BJ (cell line): ENCODE measurements at regions of chr17 and their contacts with region 1.

Region 1: DNA sequence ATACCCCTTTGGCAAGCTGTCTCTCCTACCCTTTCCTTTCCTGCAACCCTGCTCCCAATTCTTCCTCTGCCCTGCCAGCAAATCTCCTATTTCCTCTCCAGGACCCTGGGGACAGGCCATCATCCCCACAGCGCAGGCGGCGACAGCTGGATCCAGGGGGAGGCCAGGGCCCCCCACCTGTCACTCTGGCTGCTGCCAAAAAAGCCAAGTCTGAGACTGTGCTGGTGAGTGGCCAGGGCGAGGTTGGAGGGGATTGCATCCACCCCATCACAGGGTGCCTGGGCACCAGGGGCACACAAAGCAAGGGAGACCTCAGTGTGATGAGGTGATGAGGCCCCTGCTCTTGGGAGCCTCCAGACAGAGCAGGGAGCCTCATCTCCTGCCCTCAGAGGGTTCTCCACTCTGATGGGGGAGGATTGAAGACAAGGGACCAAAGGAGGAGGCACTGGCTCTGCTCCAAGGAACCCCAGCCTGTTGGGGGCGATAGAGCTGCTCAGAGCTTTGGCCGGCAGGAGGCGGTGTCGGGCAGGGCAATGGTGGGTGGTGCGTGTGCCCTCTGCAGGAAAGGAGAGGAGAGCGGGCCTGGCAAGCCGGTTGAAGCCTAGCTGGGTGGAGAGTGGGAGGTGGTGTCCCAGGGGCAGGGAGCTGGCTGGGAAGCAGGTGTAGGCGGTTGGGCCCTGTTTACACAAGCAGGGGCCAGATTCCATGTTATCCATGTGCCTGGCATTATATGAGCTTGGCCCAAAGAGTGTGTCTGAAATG is 15.6 kb upstream of the PDK2 start:
- DNase-seq: no peak
- H3K4me3 ChIP-seq: no peak overlapping the region
- H3K27me3 ChIP-seq: no peaks in the 10 kb centered on the region
- CTCF ChIP-seq: peak; percentile 78

Region 2: DNA sequence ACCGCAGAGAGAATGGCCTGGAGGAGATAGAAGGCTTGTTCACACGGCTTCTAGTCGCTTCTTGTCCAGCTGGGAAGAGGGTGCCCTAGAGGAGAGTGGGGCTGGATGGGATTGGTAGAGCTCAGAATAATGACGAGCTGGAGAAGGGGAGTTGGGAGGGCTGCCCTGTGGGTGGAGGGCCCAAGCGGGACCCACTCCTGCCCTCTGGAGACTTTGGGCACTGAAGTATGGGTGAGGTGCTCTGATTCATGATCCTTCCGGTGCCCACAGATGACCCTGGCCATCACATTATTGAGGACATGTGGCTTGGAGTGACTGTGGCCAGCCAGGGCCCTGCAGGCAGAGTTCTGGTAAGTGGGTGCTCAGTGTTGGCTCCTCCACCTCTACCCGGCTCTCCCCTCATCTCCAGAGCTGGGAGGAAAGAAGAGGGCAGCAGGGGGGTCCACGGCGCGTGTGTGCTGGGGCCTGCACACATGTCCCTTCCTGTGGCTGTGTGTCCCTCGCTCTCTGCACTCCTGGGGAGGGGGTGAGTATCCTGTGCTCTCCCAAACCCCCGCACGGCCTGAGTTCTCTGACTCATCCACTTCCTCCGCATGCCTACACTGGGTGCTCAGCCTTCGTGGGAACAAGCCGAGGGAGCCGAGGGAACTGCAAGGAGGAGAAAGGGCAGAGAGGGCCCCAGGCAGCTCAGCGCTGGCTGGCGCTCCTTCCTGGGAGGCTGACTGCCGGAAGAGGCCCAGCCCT is 15.1 kb before region 1 on chr17:
- CTCF ChIA-PET with region 1: interaction called, 37 read pairs
- POLR2A ChIA-PET with region 1: no interaction called
- DNase-seq: peak; percentile 86
- H3K4me3 ChIP-seq: no peak overlapping the region
- H3K27me3 ChIP-seq: no peaks in the 10 kb centered on the region
- CTCF ChIP-seq: no peak